Activated CD4-positive, alpha-beta T cell treated with anti-CD3 and anti-CD28 coated beads for 36 hours (primary cell): ENCODE measurements at regions of chr17 and their contacts with region 1.

Region 1: GRCh38 chr17:7060165-7060891 is 16.4 kb upstream of the SLC16A11 start:
- DNase-seq: peak; percentile 78
- ATAC-seq: peak; percentile 87
- H3K4me3 Mint-ChIP-seq: peak overlapping the region; percentile 49
- H3K27ac Mint-ChIP-seq: peak overlapping the region; percentile 88
- H3K4me1 Mint-ChIP-seq: peaks cover 26% of the 10 kb centered on the region
- H3K27me3 Mint-ChIP-seq: no peaks in the 10 kb centered on the region

Region 2: GRCh38 chr17:7214300-7215135 is 154.2 kb after region 1 on chr17:
- CTCF ChIA-PET with region 1: no interaction called
- POLR2A ChIA-PET with region 1: no interaction called
- intact Hi-C with region 1: loop called in 1 of 2 experiments (anchors 1 kb)
- DNase-seq: peak; percentile 100
- ATAC-seq: peak; percentile 82
- H3K4me3 Mint-ChIP-seq: peak overlapping the region; percentile 81
- H3K27ac Mint-ChIP-seq: peak overlapping the region; percentile 93
- H3K4me1 Mint-ChIP-seq: peaks cover 71% of the 10 kb centered on the region
- H3K27me3 Mint-ChIP-seq: peaks cover 7% of the 10 kb centered on the region